ENCODE measurements at regions of chr19 and their contacts with region 1.

Region 1: GRCh38 chr19:17947815-17948513 is 15.1 kb downstream of the CCDC124 start:
- DNase-seq: peak; percentile 99
- H3K4me3 Mint-ChIP-seq: peak overlapping the region; percentile 87
- H3K27ac Mint-ChIP-seq: peak overlapping the region; percentile 70
- H3K4me1 Mint-ChIP-seq: peaks cover 37% of the 10 kb centered on the region
- H3K27me3 Mint-ChIP-seq: peaks cover 32% of the 10 kb centered on the region

Region 2: GRCh38 chr19:17932485-17933338 is 15.3 kb before region 1 on chr19 and contains the start of gene CCDC124:
- intact Hi-C with region 1: loop called (anchors 2 kb)
- DNase-seq: peak; percentile 98
- H3K4me3 Mint-ChIP-seq: peak within 1 kb of the TSS; percentile 92
- H3K27ac Mint-ChIP-seq: peak within 1 kb of the TSS; percentile 94
- H3K4me1 Mint-ChIP-seq: peaks cover 18% of the 10 kb centered on the region
- H3K27me3 Mint-ChIP-seq: no peaks in the 10 kb centered on the region
- total RNA-seq, gene CCDC124: 126 and 136 TPM in 2 replicates

Region 3: GRCh38 chr19:17963937-17964691 is 16.1 kb after region 1 on chr19:
- intact Hi-C with region 1: no loop called
- DNase-seq: peak; percentile 46
- H3K4me3 Mint-ChIP-seq: no peak overlapping the region
- H3K27ac Mint-ChIP-seq: no peak overlapping the region
- H3K4me1 Mint-ChIP-seq: peaks cover 2% of the 10 kb centered on the region
- H3K27me3 Mint-ChIP-seq: peaks cover 47% of the 10 kb centered on the region

Region 4: DNA sequence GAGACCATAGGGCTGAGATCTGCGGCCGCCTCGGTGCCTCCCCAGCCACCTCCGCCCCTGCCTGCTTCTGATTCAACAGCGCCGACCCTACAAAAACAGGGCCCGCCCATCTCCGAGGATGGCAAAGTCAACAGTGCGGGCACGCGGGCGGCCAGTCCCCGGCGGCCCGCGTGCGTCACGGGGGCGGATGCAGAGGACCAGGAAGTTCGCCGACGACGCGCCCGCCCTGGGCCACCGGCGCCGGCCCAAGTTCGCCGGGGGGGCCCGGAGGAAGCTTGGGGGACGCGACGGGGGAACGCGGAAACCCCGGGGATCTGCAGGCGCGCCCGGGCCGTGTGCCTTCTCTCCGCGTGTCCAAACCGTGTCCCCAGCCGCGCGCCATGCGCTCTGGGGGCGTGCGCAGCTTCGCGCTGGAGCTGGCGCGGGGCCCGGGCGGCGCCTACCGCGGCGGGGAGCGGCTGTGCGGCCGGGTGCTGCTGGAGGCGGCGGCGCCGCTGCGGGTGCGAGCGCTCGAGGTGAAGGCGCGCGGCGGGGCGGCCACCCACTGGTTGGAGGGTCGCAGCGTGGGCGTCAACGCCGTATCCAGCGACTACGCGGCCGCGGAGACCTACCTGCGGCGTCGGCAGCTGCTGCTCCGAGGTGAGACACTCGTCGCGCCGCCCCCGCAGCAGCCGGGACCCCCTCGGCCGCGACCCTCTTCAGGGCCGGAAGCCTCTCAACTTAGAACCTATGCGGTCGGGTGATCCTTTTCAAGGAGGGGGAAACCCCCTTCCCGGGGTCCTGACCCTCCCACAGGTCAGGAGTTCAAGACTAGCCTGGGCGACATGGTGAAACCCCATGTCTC is 53.2 kb after region 1 on chr19:
- intact Hi-C with region 1: loop called (anchors 1 kb)
- DNase-seq: peak; percentile 97
- H3K4me3 Mint-ChIP-seq: peak overlapping the region; percentile 93
- H3K27ac Mint-ChIP-seq: peak overlapping the region; percentile 99
- H3K4me1 Mint-ChIP-seq: peaks cover 15% of the 10 kb centered on the region
- H3K27me3 Mint-ChIP-seq: no peaks in the 10 kb centered on the region

Region 5: GRCh38 chr19:18152444-18152816 is 204.5 kb after region 1 on chr19:
- intact Hi-C with region 1: loop called (anchors 2 kb)
- DNase-seq: peak; percentile 99
- H3K4me3 Mint-ChIP-seq: peak overlapping the region; percentile 86
- H3K27ac Mint-ChIP-seq: peak overlapping the region; percentile 96
- H3K4me1 Mint-ChIP-seq: peaks cover 24% of the 10 kb centered on the region
- H3K27me3 Mint-ChIP-seq: no peaks in the 10 kb centered on the region